ENCODE measurements at regions of chr3 and their contacts with region 1.

Region 1: DNA sequence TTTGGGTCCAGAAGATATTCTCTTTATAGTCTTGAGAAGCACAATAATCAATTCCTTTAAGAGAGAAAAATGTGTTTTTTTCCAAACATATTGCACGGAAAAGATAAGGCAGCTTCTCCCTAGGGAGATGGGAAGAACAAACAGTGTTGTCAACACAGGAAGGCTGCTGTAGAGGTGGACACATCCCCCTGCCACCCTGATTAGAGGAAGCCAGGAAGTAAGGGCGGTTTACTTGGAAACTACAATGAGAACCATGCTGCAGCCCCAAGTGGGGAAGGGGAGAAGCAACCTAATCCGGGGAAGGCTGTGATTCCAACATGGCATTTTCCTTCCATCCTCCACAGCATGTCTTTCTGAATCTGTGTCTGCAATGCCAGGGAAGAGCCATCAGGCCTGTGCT is 256.9 kb upstream of the TGFBR2 start:
- DNase-seq: no peak
- H3K4me3 Mint-ChIP-seq: no peak overlapping the region
- H3K27ac Mint-ChIP-seq: peak overlapping the region; percentile 32
- H3K4me1 Mint-ChIP-seq: peaks cover 82% of the 10 kb centered on the region
- H3K27me3 Mint-ChIP-seq: peaks cover 25% of the 10 kb centered on the region

Region 2: GRCh38 chr3:30319713-30320112 is 29.8 kb before region 1 on chr3:
- CTCF ChIA-PET with region 1: interaction called, 10 read pairs
- POLR2A ChIA-PET with region 1: no interaction called
- DNase-seq: peak; percentile 22
- H3K4me3 Mint-ChIP-seq: no peak overlapping the region
- H3K27ac Mint-ChIP-seq: no peak overlapping the region
- H3K4me1 Mint-ChIP-seq: peaks cover 3% of the 10 kb centered on the region
- H3K27me3 Mint-ChIP-seq: no peaks in the 10 kb centered on the region

Region 3: GRCh38 chr3:30408105-30408557 is 58.6 kb after region 1 on chr3:
- CTCF ChIA-PET with region 1: no interaction called
- POLR2A ChIA-PET with region 1: no interaction called
- DNase-seq: no peak
- H3K4me3 Mint-ChIP-seq: no peak overlapping the region
- H3K27ac Mint-ChIP-seq: no peak overlapping the region
- H3K4me1 Mint-ChIP-seq: no peaks in the 10 kb centered on the region
- H3K27me3 Mint-ChIP-seq: no peaks in the 10 kb centered on the region